ENCODE measurements at regions of chr5 and their contacts with region 1.

Region 1: GRCh38 chr5:3595006-3595961 is at the start of gene IRX1:
- DNase-seq: peak; percentile 80
- H3K4me3 Mint-ChIP-seq: peak within 1 kb of the TSS; percentile 79
- H3K27ac Mint-ChIP-seq: peak within 1 kb of the TSS; percentile 93
- H3K4me1 Mint-ChIP-seq: peaks cover 8% of the 10 kb centered on the region
- H3K27me3 Mint-ChIP-seq: no peaks in the 10 kb centered on the region
- CTCF ChIP-seq: no peak
- total RNA-seq, gene IRX1: 13.8 and 15.5 TPM in 2 replicates

Region 2: GRCh38 chr5:2848651-2849050 is 746.6 kb before region 1 on chr5:
- CTCF ChIA-PET with region 1: no interaction called
- POLR2A ChIA-PET with region 1: no interaction called
- intact Hi-C with region 1: loop called (anchors 5 kb)
- DNase-seq: peak; percentile 25
- H3K4me3 Mint-ChIP-seq: no peak overlapping the region
- H3K27ac Mint-ChIP-seq: no peak overlapping the region
- H3K4me1 Mint-ChIP-seq: peaks cover 5% of the 10 kb centered on the region
- H3K27me3 Mint-ChIP-seq: no peaks in the 10 kb centered on the region
- CTCF ChIP-seq: peak; percentile 14

Region 3: GRCh38 chr5:3542158-3542557 is 53.1 kb before region 1 on chr5:
- CTCF ChIA-PET with region 1: no interaction called
- POLR2A ChIA-PET with region 1: no interaction called
- intact Hi-C with region 1: no loop called
- DNase-seq: peak; percentile 73
- H3K4me3 Mint-ChIP-seq: no peak overlapping the region
- H3K27ac Mint-ChIP-seq: no peak overlapping the region
- H3K4me1 Mint-ChIP-seq: peaks cover 4% of the 10 kb centered on the region
- H3K27me3 Mint-ChIP-seq: no peaks in the 10 kb centered on the region
- CTCF ChIP-seq: no peak

Region 4: DNA sequence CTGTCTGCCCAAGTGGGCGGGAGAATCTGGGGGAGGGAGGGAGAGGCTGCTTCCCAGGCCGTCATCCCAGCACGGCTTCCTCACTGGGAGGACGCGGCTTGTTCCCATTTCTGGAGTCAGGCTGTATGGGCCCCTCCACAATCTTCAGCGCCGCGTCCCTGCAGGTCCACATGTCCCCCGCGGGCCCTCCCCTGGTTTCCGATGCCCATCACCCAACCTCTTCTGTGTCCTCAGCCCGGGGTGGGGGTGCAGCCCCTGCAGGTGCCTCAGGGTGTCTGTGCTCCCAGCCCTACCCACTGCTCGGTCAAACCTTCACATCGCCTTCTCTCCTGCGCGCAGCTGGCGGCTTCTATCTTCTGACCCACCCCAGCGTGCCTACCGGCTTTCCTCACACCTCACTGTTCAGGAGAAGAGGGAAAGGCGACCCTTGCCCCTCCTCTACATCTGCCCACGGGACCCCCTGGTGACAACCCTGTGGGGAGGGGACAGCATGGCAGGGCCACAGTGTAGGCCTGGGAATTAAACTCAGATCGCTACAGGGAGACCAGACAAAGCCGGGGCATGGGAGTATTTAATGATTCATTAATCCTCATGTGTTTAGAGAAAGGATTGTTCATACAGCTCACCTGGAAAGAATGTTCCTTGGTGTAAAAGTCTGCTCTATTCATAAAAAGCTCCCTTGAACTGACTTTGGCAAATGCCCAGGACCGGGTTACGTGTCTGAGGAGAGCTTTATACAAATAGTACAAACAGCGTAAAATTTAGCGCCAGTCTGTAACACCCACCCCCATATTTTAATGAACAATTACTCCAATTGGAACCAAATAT is 145.5 kb after region 1 on chr5:
- CTCF ChIA-PET with region 1: no interaction called
- POLR2A ChIA-PET with region 1: interaction called, 4 read pairs
- intact Hi-C with region 1: loop called (anchors 2 kb)
- DNase-seq: peak; percentile 85
- H3K4me3 Mint-ChIP-seq: peak overlapping the region; percentile 24
- H3K27ac Mint-ChIP-seq: peak overlapping the region; percentile 90
- H3K4me1 Mint-ChIP-seq: peaks cover 18% of the 10 kb centered on the region
- H3K27me3 Mint-ChIP-seq: no peaks in the 10 kb centered on the region
- CTCF ChIP-seq: no peak

Region 5: DNA sequence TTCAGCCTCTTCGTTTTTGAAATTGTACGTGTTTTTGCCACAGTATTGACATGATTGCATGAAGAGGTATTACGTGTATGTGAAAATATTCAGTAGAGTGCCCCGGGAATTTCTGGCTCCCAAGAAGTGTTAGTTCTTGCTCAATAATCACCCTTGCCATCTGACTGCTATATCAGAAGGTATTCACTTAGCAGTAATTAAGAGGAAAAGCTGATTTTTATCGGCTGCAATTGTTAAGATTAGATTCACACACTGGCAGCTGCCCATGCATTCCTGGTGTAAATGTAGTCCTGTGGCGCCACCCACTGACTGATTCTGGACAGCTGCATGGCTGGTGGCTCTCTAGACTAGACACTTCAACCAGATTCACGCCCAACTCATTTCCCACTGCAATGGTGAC is 1104.8 kb after region 1 on chr5:
- CTCF ChIA-PET with region 1: no interaction called
- POLR2A ChIA-PET with region 1: interaction called, 3 read pairs
- intact Hi-C with region 1: loop called (anchors 5 kb)
- DNase-seq: peak; percentile 68
- H3K4me3 Mint-ChIP-seq: peak overlapping the region; percentile 21
- H3K27ac Mint-ChIP-seq: no peak overlapping the region
- H3K4me1 Mint-ChIP-seq: no peaks in the 10 kb centered on the region
- H3K27me3 Mint-ChIP-seq: no peaks in the 10 kb centered on the region
- CTCF ChIP-seq: peak; percentile 56

Measured in MCF 10A (cell line).